ENCODE measurements at regions of chr6 and their contacts with region 1.

Region 1: GRCh38 chr6:47242483-47243386 is 67.0 kb downstream of the TNFRSF21 start:
- DNase-seq: peak; percentile 86 to 88
- ATAC-seq: peak; percentile 89 to 99 (median 95)
- H3K4me3 ChIP-seq: no peak overlapping the region
- H3K27ac ChIP-seq: peak overlapping the region in 6 of 10 donors; percentile 26 to 59 (median 44)
- H3K4me1 ChIP-seq: peaks cover 0 to 58% (median 34%) of the 10 kb centered on the region in 9 donors
- H3K27me3 ChIP-seq: no peaks in the 10 kb centered on the region
- CTCF ChIP-seq: no peak

Region 2: GRCh38 chr6:47097092-47097945 is 145.4 kb before region 1 on chr6:
- intact Hi-C with region 1: loop called in 7 of 10 experiments (anchors 5 to 10 kb)
- DNase-seq: peak in 1 of 2 donors; percentile 75
- ATAC-seq: peak; percentile 79 to 94 (median 90)
- H3K4me3 ChIP-seq: no peak overlapping the region
- H3K27ac ChIP-seq: peak overlapping the region in 4 of 10 donors; percentile 7 to 32 (median 28)
- H3K4me1 ChIP-seq: peaks cover 0 to 39% (median 10%) of the 10 kb centered on the region in 9 donors
- H3K27me3 ChIP-seq: peaks cover 0 to 1% (median 0%) of the 10 kb centered on the region in 7 donors
- CTCF ChIP-seq: peak; percentile 52 to 81 (median 66)

Region 3: DNA sequence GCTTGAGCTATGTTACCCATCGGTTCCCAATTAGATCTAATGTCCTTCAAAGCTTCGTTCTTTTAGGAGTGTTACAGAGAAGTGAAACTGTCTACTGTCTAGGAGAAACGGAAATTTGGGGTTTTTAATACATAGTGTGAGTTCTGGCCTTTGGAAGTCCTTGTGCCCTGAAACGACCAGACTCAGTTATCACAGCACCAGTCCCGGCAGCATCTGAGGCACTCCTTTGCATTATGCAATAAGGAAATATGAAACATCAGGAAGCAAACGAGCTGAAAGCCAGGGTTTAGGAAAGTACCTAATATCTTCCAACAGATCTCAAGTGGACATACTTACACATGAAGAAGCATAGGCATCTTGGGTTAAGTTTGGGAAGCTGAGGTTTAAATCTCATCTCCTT is 138.8 kb before region 1 on chr6:
- intact Hi-C with region 1: loop called in 7 of 10 experiments (anchors 5 to 10 kb)
- DNase-seq: no peak
- ATAC-seq: peak in 4 of 8 donors; percentile 38 to 74 (median 62)
- H3K4me3 ChIP-seq: no peak overlapping the region
- H3K27ac ChIP-seq: no peak overlapping the region
- H3K4me1 ChIP-seq: peaks cover 0 to 13% (median 0%) of the 10 kb centered on the region in 9 donors
- H3K27me3 ChIP-seq: peaks cover 0 to 9% (median 0%) of the 10 kb centered on the region in 7 donors
- CTCF ChIP-seq: no peak

Region 4: GRCh38 chr6:47146428-47147174 is 96.1 kb before region 1 on chr6:
- intact Hi-C with region 1: loop called in 1 of 10 experiments (anchors 5 kb)
- DNase-seq: no peak
- ATAC-seq: peak in 6 of 8 donors; percentile 34 to 86 (median 60)
- H3K4me3 ChIP-seq: no peak overlapping the region
- H3K27ac ChIP-seq: peak overlapping the region in 5 of 10 donors; percentile 6 to 41 (median 40)
- H3K4me1 ChIP-seq: peaks cover 0 to 24% (median 10%) of the 10 kb centered on the region in 9 donors
- H3K27me3 ChIP-seq: no peaks in the 10 kb centered on the region
- CTCF ChIP-seq: no peak

Region 5: GRCh38 chr6:47209632-47210031 is 33.1 kb before region 1 on chr6:
- intact Hi-C with region 1: no loop called
- DNase-seq: peak in 1 of 2 donors; percentile 5
- ATAC-seq: no peak
- H3K4me3 ChIP-seq: no peak overlapping the region
- H3K27ac ChIP-seq: no peak overlapping the region
- H3K4me1 ChIP-seq: no peaks in the 10 kb centered on the region
- H3K27me3 ChIP-seq: no peaks in the 10 kb centered on the region
- CTCF ChIP-seq: no peak

Region 6: DNA sequence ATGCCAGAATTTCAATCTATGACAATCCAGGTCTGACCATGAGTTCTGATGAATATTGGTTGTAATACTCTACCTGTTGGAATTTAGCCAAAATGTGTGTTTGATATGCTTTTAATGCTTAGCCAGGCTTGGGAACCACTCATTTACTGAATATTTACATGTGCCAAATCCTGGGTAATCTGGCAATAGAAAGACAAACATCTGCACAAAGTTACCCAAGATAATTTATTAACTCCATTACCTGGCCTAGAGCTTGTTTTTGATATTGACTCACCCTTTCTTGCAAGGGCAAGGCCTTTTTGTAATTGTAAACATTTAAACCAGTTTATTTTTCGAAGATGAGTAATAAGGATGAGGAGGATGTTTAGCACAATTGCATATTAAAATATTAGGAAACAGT is 221.3 kb after region 1 on chr6:
- intact Hi-C with region 1: loop called in 1 of 10 experiments (anchors 10 kb)
- DNase-seq: no peak
- ATAC-seq: no peak
- H3K4me3 ChIP-seq: no peak overlapping the region
- H3K27ac ChIP-seq: no peak overlapping the region
- H3K4me1 ChIP-seq: no peaks in the 10 kb centered on the region
- H3K27me3 ChIP-seq: no peaks in the 10 kb centered on the region
- CTCF ChIP-seq: no peak

Measured in heart right ventricle (tissue), 16 donors.